Psoas muscle (tissue), 8 donors: ENCODE measurements at regions of chr12 and their contacts with region 1.

Region 1: DNA sequence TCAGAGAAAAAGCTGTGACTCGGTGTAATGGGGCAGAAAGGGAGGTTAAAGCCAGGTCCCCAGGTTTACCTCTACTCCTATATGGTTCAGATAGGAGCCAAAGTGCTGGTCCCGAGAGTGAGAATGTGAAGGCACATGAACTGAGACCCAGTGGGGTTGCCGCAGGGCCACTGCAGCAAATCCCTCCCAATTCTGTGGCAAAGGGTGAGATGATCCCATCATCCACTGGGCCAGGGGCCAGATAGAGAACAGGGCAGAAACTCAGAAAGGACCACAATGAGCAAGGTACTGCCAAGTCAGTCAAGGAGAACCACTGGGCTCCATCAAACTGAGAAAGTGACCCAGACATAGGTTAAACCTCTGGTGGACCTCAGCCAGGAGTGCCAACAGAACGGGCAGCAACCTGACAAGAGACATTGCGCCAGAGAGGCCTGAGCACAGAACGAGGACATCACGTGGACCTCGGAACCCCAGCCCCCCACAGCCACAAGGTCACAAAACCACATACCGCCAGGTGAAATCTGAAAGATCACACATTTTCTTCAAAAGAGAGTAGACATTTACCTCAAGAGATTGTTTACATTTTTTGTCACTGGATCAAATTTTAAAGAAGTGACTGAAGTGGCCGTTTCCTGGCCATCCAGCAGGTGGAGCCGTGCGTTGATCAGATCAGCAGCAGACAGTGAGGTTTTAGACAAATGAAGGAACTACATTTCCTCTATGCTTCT is 20.5 kb upstream of the ITPR2 start:
- DNase-seq: peak; percentile 61 to 76
- ATAC-seq: peak; percentile 60 to 94 (median 79)
- H3K4me3 ChIP-seq: no peak overlapping the region
- H3K27ac ChIP-seq: no peak overlapping the region
- H3K4me1 ChIP-seq: no peaks in the 10 kb centered on the region
- H3K27me3 ChIP-seq: no peaks in the 10 kb centered on the region
- CTCF ChIP-seq: peak; percentile 82

Region 2: DNA sequence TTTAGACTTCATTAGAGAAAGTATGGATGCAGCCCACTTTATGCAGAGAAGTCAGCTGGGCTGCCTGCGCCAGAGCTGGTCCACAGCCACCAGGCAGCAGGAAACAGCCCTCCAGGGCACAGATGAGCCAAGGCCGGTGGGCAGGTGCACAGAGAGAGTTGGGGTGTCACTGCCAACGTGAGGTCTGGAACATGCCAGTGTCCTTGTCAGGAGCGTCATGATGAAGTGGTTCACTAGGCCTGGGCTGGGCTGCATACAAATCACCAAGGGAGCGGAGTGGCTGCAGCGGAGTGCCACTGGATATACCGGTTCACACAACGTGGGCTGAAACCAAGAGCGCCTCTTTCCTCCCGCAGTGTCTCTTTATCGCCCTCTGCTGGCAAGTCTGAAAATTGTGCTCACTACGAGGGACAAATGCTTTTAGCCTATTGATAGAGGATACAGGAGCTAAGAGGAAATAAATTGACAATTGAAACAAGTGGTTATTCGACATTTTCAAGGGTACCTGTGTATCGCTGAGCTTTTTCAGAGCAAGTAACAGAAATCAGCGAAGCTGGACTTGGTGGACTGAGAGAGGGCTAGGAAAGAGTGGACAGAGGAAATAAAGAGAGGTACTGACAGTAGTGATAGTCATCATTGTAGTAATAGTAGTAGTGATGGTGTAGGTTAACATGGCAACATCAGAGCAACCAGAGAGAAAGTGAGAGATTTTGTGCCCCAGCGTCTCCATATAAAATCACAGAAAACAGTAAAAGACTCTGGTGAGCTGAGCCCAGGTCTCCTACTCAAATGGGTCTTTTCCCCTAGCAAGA is 31.5 kb after region 1 on chr12:
- intact Hi-C with region 1: loop called (anchors 1 to 2 kb)
- DNase-seq: peak; percentile 66 to 79
- ATAC-seq: peak; percentile 90 to 98 (median 95)
- H3K4me3 ChIP-seq: no peak overlapping the region
- H3K27ac ChIP-seq: no peak overlapping the region
- H3K4me1 ChIP-seq: no peaks in the 10 kb centered on the region
- H3K27me3 ChIP-seq: no peaks in the 10 kb centered on the region
- CTCF ChIP-seq: peak; percentile 94

Region 3: GRCh38 chr12:27305673-27306456 is 452.4 kb after region 1 on chr12:
- intact Hi-C with region 1: loop called in 1 of 2 experiments (anchors 5 kb)
- DNase-seq: no peak
- ATAC-seq: no peak
- H3K4me3 ChIP-seq: no peak overlapping the region
- H3K27ac ChIP-seq: no peak overlapping the region
- H3K4me1 ChIP-seq: no peaks in the 10 kb centered on the region
- H3K27me3 ChIP-seq: no peaks in the 10 kb centered on the region
- CTCF ChIP-seq: peak; percentile 67